ENCODE measurements at regions of chr11 and their contacts with region 1.

Region 1: DNA sequence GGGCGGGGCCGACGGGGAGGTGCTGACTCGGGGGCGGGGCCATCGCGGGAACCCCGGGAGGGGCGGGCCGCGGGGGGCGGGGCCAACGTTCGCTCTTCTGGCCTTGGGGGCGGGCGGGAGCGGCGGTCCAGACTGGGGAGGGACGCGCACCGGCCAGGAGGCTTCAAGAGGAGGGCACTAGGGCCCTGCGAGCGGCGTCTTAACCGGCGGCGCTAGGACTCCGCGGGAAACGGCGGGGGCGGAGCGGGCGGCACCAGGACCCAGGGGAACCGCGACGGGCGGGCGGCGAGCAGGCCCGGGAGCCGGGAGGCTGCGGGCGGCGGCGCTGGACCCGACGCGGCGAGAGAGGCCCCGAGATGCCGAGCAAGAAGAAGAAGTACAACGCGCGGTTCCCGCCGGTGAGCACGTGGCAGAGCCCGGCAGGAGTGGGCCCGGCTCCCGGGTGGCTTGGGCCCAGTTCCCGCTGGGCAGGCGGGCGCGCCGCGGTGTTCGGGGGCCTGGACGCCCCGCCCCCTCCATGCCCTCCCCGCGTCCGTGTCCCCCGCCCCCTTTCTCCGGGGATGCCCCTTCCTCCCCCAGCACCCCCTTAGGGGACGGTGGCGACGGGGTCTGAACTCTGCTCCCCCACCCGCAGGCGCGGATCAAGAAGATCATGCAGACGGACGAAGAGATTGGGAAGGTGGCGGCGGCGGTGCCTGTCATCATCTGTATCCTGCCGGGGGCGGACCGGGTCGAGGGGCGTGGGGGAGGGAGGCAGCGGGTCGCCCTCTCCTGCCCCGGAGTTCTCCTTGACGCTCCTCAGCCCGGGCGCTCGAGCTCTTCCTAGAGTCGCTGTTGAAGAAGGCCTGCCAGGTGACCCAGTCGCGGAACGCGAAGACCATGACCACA is at the start of gene DRAP1:
- DNase-seq: peak; percentile 98 to 100 (median 99)
- H3K4me3 ChIP-seq: peak within 1 kb of the TSS; percentile 82 to 96 (median 93)
- H3K27ac ChIP-seq: peak within 1 kb of the TSS in 4 of 5 donors; percentile 81 to 100 (median 94)
- H3K4me1 ChIP-seq: peaks cover 35 to 47% of the 10 kb centered on the region in 2 donors
- H3K27me3 ChIP-seq: no peaks in the 10 kb centered on the region
- CTCF ChIP-seq: peak in 1 of 6 experiments; percentile 11
- POLR2A ChIP-seq: peak; percentile 41 to 59
- total RNA-seq, gene DRAP1: 75.8 to 111 (median 92.3) TPM

Region 2: GRCh38 chr11:65961232-65961901 is 42.0 kb after region 1 on chr11 and contains the start of gene SART1:
- intact Hi-C with region 1: loop called in 1 of 2 experiments (anchors 5 kb)
- DNase-seq: peak; percentile 95 to 99 (median 97)
- H3K4me3 ChIP-seq: peak within 1 kb of the TSS; percentile 91 to 100 (median 93)
- H3K27ac ChIP-seq: peak within 1 kb of the TSS; percentile 57 to 88 (median 82)
- H3K4me1 ChIP-seq: peaks cover 16 to 21% of the 10 kb centered on the region in 2 donors
- H3K27me3 ChIP-seq: no peaks in the 10 kb centered on the region
- CTCF ChIP-seq: no peak
- POLR2A ChIP-seq: peak; percentile 54 to 68
- total RNA-seq, gene SART1: 16.9 to 47.4 (median 31.2) TPM

Measured in adrenal gland (tissue), 19 donors.